Heart right ventricle (tissue), 16 donors: ENCODE measurements at regions of chr2 and their contacts with region 1.

Region 1: GRCh38 chr2:178193823-178194599 is at the start of gene OSBPL6:
- DNase-seq: peak; percentile 72 to 86
- ATAC-seq: peak; percentile 94 to 98 (median 96)
- H3K4me3 ChIP-seq: peak within 1 kb of the TSS; percentile 84 to 98 (median 93)
- H3K27ac ChIP-seq: peak within 1 kb of the TSS; percentile 85 to 96 (median 94)
- H3K4me1 ChIP-seq: peaks cover 0 to 29% (median 18%) of the 10 kb centered on the region in 9 donors
- H3K27me3 ChIP-seq: peaks cover 0 to 79% (median 8%) of the 10 kb centered on the region in 7 donors
- CTCF ChIP-seq: peak in 6 of 9 donors; percentile 15 to 60 (median 46)
- total RNA-seq, gene OSBPL6: 1.2 to 8.0 (median 5.6) TPM

Region 2: GRCh38 chr2:178136321-178137025 is 57.5 kb before region 1 on chr2:
- intact Hi-C with region 1: loop called in 2 of 10 experiments (anchors 10 kb)
- DNase-seq: no peak
- ATAC-seq: no peak
- H3K4me3 ChIP-seq: no peak overlapping the region
- H3K27ac ChIP-seq: no peak overlapping the region
- H3K4me1 ChIP-seq: no peaks in the 10 kb centered on the region
- H3K27me3 ChIP-seq: no peaks in the 10 kb centered on the region
- CTCF ChIP-seq: no peak

Region 3: GRCh38 chr2:178208817-178209216 is 14.8 kb after region 1 on chr2:
- intact Hi-C with region 1: loop called in 1 of 10 experiments (anchors 1 kb)
- DNase-seq: no peak
- ATAC-seq: no peak
- H3K4me3 ChIP-seq: no peak overlapping the region
- H3K27ac ChIP-seq: no peak overlapping the region
- H3K4me1 ChIP-seq: peaks cover 0 to 5% (median 0%) of the 10 kb centered on the region in 9 donors
- H3K27me3 ChIP-seq: no peaks in the 10 kb centered on the region
- CTCF ChIP-seq: peak in 7 of 9 donors; percentile 20 to 52 (median 29)

Region 4: DNA sequence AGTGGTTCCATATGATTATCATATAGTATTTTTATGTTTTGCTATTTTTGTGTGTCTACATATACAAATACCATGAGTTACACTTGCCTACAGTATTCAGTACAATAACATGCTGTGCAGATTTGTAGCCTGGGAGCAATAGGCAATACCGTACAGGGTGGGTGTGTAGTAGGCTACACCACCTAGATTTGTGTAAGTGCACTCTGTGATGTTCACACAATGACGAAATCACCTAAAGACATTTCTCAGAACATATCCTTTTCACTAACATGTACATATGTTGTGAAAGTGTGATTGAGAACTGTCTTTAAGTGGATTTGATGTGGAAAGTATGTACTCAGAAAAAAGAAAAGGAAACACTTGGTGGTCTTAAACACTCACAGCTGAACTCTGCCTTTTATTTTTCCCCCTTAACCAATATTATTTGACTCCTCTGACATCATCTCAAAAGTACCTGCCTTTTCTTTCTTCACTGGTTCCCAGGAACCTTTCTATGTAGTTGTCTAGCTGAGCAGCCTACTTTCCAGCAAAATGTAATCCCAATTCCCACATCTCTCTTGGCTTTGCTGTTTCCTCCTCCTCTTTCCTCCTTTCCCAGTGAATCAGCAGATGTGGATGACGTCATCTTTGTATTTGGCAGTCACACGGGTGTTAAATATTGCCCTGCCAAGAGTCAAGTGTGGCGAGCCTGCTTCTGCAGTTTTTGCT is 48.0 kb after region 1 on chr2:
- intact Hi-C with region 1: loop called in 1 of 10 experiments (anchors 10 kb)
- DNase-seq: peak in 1 of 2 donors; percentile 74
- ATAC-seq: peak; percentile 54 to 94 (median 88)
- H3K4me3 ChIP-seq: no peak overlapping the region
- H3K27ac ChIP-seq: peak overlapping the region in 6 of 10 donors; percentile 33 to 63 (median 48)
- H3K4me1 ChIP-seq: peaks cover 4 to 39% (median 21%) of the 10 kb centered on the region in 9 donors
- H3K27me3 ChIP-seq: no peaks in the 10 kb centered on the region
- CTCF ChIP-seq: no peak

Region 5: DNA sequence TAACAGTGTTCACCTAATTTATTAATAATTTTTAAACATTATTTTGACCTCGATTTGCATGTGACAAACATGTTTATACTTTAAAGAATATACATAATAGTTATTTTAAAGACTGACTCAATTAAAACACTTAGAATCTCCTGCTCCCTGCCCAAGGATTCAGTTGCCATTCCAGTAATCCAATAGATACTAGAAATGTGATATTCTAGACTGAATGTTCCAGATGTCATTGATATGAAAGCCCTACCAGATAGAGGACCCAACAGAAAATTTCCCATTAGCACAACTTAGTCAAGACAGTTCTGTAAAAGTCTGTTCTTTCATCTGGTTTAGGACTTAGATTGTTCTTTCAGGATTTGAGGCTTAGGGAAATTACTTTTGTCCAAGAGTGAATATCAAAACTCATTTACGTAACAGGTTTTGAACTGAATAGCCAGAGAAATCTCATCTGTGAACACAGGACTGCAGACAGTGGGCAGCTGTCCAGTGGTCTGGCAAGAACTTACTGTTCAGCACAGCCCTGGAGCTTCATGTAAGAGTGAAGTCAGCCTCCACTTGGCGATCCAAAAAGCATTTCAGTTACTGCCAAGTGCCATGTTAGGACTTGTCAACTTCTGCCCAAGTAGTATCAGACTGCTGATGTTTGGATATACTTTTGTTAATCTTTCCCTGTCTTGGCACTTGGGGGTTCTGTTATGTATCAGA is 77.8 kb after region 1 on chr2:
- intact Hi-C with region 1: loop called in 6 of 10 experiments (anchors 2 to 10 kb)
- DNase-seq: peak; percentile 74 to 83
- ATAC-seq: peak; percentile 85 to 97 (median 94)
- H3K4me3 ChIP-seq: no peak overlapping the region
- H3K27ac ChIP-seq: peak overlapping the region in 8 of 10 donors; percentile 17 to 82 (median 74)
- H3K4me1 ChIP-seq: peaks cover 0 to 33% (median 7%) of the 10 kb centered on the region in 9 donors
- H3K27me3 ChIP-seq: no peaks in the 10 kb centered on the region
- CTCF ChIP-seq: no peak

Region 6: GRCh38 chr2:178280244-178280852 is 86.3 kb after region 1 on chr2:
- intact Hi-C with region 1: loop called in 5 of 10 experiments (anchors 2 to 10 kb)
- DNase-seq: peak in 1 of 2 donors; percentile 51
- ATAC-seq: peak in 6 of 8 donors; percentile 34 to 77 (median 58)
- H3K4me3 ChIP-seq: no peak overlapping the region
- H3K27ac ChIP-seq: no peak overlapping the region
- H3K4me1 ChIP-seq: peaks cover 0 to 20% (median 0%) of the 10 kb centered on the region in 9 donors
- H3K27me3 ChIP-seq: no peaks in the 10 kb centered on the region
- CTCF ChIP-seq: peak; percentile 73 to 86 (median 80)

Region 7: DNA sequence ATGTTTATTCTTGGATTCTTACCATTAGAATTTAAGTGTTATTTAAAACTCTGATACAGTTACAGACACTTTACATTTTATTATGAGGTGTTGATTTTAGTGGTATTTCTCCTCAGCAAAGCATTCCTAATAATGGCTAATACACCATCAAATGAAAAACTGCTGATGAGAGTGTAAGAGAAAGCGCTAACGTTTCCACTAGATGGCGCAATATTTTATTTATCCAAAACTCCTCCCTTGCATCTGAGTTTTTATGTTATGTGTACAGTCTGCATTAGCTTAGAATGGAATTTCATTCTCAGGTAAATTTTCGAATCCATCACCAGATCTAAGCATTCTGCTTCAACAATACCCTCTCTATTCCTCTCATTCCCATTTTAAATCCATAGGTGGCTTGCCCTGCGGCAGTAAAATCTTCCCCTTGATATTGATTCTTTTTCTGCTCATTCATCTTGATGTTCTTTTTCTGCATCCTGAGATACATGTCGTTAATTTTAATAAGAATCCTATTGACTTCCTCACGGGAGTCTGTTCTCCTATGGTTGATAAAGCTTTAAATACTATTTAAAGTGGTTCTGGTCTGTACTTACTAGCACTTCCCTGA is 203.1 kb after region 1 on chr2:
- intact Hi-C with region 1: loop called in 1 of 10 experiments (anchors 10 kb)
- DNase-seq: peak in 1 of 2 donors; percentile 11
- ATAC-seq: peak in 5 of 8 donors; percentile 50 to 79 (median 73)
- H3K4me3 ChIP-seq: no peak overlapping the region
- H3K27ac ChIP-seq: no peak overlapping the region
- H3K4me1 ChIP-seq: peaks cover 0 to 4% (median 0%) of the 10 kb centered on the region in 9 donors
- H3K27me3 ChIP-seq: no peaks in the 10 kb centered on the region
- CTCF ChIP-seq: peak; percentile 31 to 82 (median 72)